GM12878 (cell line): ENCODE measurements at regions of chr21 and their contacts with region 1.

Region 1: DNA sequence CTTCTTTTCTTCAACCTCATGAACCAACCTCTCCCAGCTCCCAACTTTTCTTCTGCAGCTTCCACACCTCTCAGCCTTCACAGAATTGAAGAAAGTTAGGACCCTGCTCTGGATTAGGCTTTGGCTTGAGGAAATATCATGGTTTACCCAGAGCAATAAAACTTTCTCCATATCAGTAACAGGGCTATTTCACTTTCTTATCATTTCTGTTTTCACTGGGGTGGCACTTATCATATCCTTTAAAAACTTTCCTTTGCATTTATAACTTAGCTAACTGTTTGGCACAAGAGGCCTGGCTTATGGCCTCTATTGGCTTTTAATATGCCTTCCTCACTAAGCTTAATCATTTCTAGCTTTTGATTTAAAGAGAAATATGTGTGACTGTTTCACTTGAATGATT is 9.4 kb upstream of the FAM3B start:
- DNase-seq: no peak
- ATAC-seq: no peak
- H3K4me3 ChIP-seq: no peak overlapping the region
- H3K27ac ChIP-seq: no peak overlapping the region
- H3K4me1 ChIP-seq: no peaks in the 10 kb centered on the region
- H3K27me3 ChIP-seq: peaks cover 0 to 2% of the 10 kb centered on the region in 2 experiments; a peak in 1 of 4 replicates
- CTCF ChIP-seq: no peak
- EP300 ChIP-seq: no peak
- POLR2A ChIP-seq: no peak
- RAD21 ChIP-seq: no peak

Region 2: DNA sequence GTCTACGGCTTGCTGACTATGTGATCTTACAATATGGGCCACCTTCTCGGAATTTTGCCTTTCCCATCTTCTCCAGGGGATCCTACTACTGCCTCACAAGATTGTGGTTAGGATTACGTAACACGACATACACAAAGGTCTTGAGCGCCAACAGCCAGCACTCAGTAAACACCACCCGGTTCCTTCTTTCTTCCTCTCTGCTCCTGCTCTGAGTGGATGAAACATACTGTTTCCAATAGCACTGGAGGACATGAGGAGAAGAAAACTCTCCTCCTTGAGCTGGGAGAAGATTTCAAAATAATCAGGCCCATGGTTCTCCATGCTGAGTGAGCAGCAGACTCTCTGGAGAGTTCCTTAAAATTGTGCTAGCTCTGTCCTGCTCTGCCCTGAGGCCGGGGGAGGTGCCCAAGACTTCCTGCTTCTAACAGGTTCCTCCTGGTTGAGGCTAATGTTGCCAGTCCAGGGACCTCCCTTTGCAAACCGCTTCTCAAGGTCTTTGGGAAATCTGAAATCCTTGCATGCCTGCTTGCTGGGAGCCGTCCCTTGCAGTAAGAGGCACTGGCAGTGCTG is 89.4 kb after region 1 on chr21:
- CTCF ChIA-PET with region 1: no interaction called
- POLR2A ChIA-PET with region 1: no interaction called
- RAD21 ChIA-PET with region 1: no interaction called
- SMC1A ChIA-PET with region 1: no interaction called
- in situ Hi-C with region 1: no loop called
- intact Hi-C with region 1: no loop called
- DNase-seq: no peak
- ATAC-seq: no peak
- H3K4me3 ChIP-seq: no peak overlapping the region
- H3K27ac ChIP-seq: no peak overlapping the region
- H3K4me1 ChIP-seq: no peaks in the 10 kb centered on the region; the same call in 1 of the 2 replicates
- H3K27me3 ChIP-seq: no peaks in the 10 kb centered on the region
- CTCF ChIP-seq: no peak
- EP300 ChIP-seq: no peak
- POLR2A ChIP-seq: no peak
- RAD21 ChIP-seq: no peak

Region 3: GRCh38 chr21:41500931-41501381 is 193.7 kb after region 1 on chr21:
- CTCF ChIA-PET with region 1: no interaction called
- POLR2A ChIA-PET with region 1: interaction called, 11 read pairs
- RAD21 ChIA-PET with region 1: no interaction called
- SMC1A ChIA-PET with region 1: no interaction called
- in situ Hi-C with region 1: no loop called
- intact Hi-C with region 1: no loop called
- DNase-seq: no peak
- ATAC-seq: no peak
- H3K4me3 ChIP-seq: no peak overlapping the region
- H3K27ac ChIP-seq: no peak overlapping the region
- H3K4me1 ChIP-seq: no peaks in the 10 kb centered on the region
- H3K27me3 ChIP-seq: peaks cover 2 to 7% of the 10 kb centered on the region in 2 experiments
- CTCF ChIP-seq: no peak
- EP300 ChIP-seq: no peak
- POLR2A ChIP-seq: no peak
- RAD21 ChIP-seq: no peak